PC-9 (cell line): ENCODE measurements at regions of chr20 and their contacts with region 1.

Region 1: GRCh38 chr20:13009682-13010406 is 1.1 kb downstream of the SPTLC3 start:
- DNase-seq: peak; percentile 38 to 72
- H3K4me3 ChIP-seq: peak overlapping the region; percentile 50
- H3K27ac ChIP-seq: peak overlapping the region; percentile 63
- H3K4me1 ChIP-seq: peaks cover 28% of the 10 kb centered on the region
- H3K27me3 ChIP-seq: no peaks in the 10 kb centered on the region
- CTCF ChIP-seq: no peak

Region 2: GRCh38 chr20:12414446-12415187 is 595.2 kb before region 1 on chr20:
- CTCF ChIA-PET with region 1: no interaction called
- POLR2A ChIA-PET with region 1: no interaction called
- intact Hi-C with region 1: no loop called
- DNase-seq: peak; percentile 25 to 41
- H3K4me3 ChIP-seq: no peak overlapping the region; the same call in 1 of the 2 replicates
- H3K27ac ChIP-seq: peak overlapping the region; percentile 27; the same call in 1 of the 2 replicates
- H3K4me1 ChIP-seq: peaks cover 29% of the 10 kb centered on the region
- H3K27me3 ChIP-seq: no peaks in the 10 kb centered on the region
- CTCF ChIP-seq: no peak

Region 3: GRCh38 chr20:12970372-12970821 is 39.4 kb before region 1 on chr20:
- CTCF ChIA-PET with region 1: interaction called, 3 read pairs
- POLR2A ChIA-PET with region 1: no interaction called
- intact Hi-C with region 1: loop called (anchors 1 kb)
- DNase-seq: no peak
- H3K4me3 ChIP-seq: no peak overlapping the region
- H3K27ac ChIP-seq: no peak overlapping the region
- H3K4me1 ChIP-seq: no peaks in the 10 kb centered on the region
- H3K27me3 ChIP-seq: no peaks in the 10 kb centered on the region
- CTCF ChIP-seq: peak; percentile 63

Region 4: DNA sequence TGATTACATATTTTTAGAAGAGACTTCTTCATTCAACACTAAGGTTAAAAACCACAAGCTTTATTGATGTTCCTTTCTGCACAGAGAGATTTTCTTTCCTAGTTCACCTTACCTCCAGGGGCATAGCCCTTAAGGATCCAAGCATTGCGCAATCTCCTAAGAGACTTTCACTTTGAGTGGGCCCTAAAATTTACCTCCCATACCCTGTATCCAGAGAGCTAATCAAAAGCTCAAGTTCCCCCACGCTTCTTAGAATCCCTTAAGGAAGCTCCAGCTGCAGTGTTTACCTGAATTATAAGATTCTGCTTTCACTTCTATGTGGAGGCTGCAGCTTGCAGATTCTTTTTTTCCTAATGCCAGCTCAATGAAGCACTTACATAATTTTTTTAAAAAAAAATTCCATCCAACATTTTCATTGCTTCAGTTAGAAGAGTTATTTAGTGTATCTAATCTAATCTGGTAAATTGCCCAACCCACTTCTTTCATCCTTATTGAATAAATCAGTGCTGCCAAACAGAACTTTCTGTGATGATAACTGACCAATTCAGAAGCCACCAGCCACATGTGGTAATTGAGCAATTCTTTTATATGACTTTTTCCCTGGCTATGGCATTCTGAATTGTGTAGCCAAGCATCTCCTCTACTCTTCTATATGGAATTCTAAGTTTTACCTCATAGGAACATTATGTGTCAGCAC is 25.6 kb before region 1 on chr20:
- CTCF ChIA-PET with region 1: no interaction called
- POLR2A ChIA-PET with region 1: interaction called, 11 read pairs
- intact Hi-C with region 1: loop called (anchors 2 kb)
- DNase-seq: no peak
- H3K4me3 ChIP-seq: no peak overlapping the region
- H3K27ac ChIP-seq: no peak overlapping the region; the same call in 1 of the 2 replicates
- H3K4me1 ChIP-seq: peaks cover 17% of the 10 kb centered on the region
- H3K27me3 ChIP-seq: no peaks in the 10 kb centered on the region
- CTCF ChIP-seq: no peak

Region 5: GRCh38 chr20:13068349-13068748 is 58.5 kb after region 1 on chr20:
- CTCF ChIA-PET with region 1: no interaction called
- POLR2A ChIA-PET with region 1: no interaction called
- intact Hi-C with region 1: loop called (anchors 1 kb)
- DNase-seq: peak; percentile 50 to 57
- H3K4me3 ChIP-seq: no peak overlapping the region
- H3K27ac ChIP-seq: no peak overlapping the region
- H3K4me1 ChIP-seq: peaks cover 14% of the 10 kb centered on the region
- H3K27me3 ChIP-seq: no peaks in the 10 kb centered on the region
- CTCF ChIP-seq: no peak

Region 6: DNA sequence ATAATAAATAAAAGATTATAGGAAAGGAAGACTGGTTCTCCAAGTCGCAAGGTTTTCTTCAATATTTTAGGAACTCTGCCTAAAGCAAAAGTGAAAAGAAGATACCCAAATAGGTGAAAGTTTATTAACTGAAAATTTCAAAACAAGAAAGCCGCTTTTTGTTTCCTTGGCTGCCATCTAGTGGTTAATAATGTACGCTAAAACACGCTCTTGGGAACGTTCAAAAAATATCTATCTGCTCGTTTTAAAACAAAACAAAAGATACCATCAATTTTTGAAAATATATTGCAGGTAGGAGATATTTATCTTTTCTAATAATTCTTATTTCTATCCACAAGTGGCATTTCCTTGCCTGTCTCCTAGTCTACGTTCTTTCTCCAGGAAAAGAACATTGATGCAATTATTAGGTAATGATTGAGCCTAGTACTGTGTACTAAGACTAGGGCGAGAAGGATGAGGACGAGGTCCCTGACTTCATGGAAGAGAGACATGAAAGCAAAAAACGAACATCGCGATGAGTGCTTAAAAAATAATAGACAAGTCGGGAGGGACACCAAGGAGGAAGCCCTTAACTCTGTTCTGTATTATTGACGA is 96.1 kb after region 1 on chr20:
- CTCF ChIA-PET with region 1: no interaction called
- POLR2A ChIA-PET with region 1: no interaction called
- intact Hi-C with region 1: loop called (anchors 1 kb)
- DNase-seq: no peak
- H3K4me3 ChIP-seq: no peak overlapping the region
- H3K27ac ChIP-seq: no peak overlapping the region
- H3K4me1 ChIP-seq: peaks cover 14% of the 10 kb centered on the region
- H3K27me3 ChIP-seq: no peaks in the 10 kb centered on the region
- CTCF ChIP-seq: peak; percentile 83